ENCODE measurements at regions of chrX and their contacts with region 1.

Region 1: GRCh38 chrX:11381464-11381863 is 88.3 kb downstream of the AMELX start:
- DNase-seq: peak; percentile 54
- H3K4me3 ChIP-seq: no peak overlapping the region
- H3K27ac ChIP-seq: no peak overlapping the region
- H3K4me1 ChIP-seq: no peaks in the 10 kb centered on the region
- CTCF ChIP-seq: peak; percentile 73

Region 2: GRCh38 chrX:11499076-11500044 is 117.9 kb after region 1 on chrX:
- CTCF ChIA-PET with region 1: no interaction called
- POLR2A ChIA-PET with region 1: no interaction called
- intact Hi-C with region 1: loop called (anchors 10 kb)
- DNase-seq: no peak
- H3K4me3 ChIP-seq: no peak overlapping the region
- H3K27ac ChIP-seq: no peak overlapping the region
- H3K4me1 ChIP-seq: no peaks in the 10 kb centered on the region
- CTCF ChIP-seq: no peak